Activated CD4-positive, alpha-beta T cell treated with anti-CD3 and anti-CD28 coated beads for 36 hours (primary cell): ENCODE measurements at regions of chr11 and their contacts with region 1.

Region 1: DNA sequence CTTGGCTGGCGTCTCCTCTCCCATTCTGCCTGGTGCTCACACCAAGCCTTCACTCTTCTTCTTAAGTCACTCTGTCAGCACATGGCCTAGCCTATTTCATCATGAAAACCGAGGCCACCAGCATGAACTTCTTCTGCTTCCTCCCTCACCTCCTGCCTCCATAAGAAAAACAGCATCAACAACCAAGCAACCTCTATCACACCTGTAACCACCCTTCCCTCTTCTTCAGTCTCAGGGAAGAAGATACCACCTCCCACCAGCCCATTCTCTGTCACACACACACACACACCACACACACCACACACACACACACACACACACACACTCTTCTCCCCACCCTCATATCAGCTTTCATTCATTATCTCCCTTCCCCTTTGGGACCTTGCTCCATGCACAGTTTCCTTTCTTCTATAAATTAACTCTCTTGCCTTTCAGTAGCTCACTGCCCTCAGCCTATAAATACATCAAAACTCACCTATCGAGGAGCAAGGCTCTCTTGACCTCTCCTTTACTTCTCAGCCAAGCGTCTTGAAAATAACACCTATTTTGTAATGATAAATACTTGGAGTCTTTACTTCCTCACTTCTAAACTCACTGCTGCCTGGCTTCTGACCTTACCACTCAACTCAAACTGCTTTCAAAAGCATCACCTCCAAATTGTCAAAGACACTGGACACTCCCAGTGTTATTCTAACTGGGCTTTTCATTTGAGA is 36.6 kb downstream of the SC5D start:
- DNase-seq: peak; percentile 34
- ATAC-seq: peak; percentile 45
- H3K4me3 Mint-ChIP-seq: no peak overlapping the region
- H3K27ac Mint-ChIP-seq: no peak overlapping the region
- H3K4me1 Mint-ChIP-seq: no peaks in the 10 kb centered on the region
- H3K27me3 Mint-ChIP-seq: no peaks in the 10 kb centered on the region

Region 2: GRCh38 chr11:121199516-121199915 is 129.6 kb before region 1 on chr11:
- CTCF ChIA-PET with region 1: no interaction called
- POLR2A ChIA-PET with region 1: no interaction called
- intact Hi-C with region 1: no loop called
- DNase-seq: no peak
- ATAC-seq: no peak
- H3K4me3 Mint-ChIP-seq: no peak overlapping the region
- H3K27ac Mint-ChIP-seq: no peak overlapping the region
- H3K4me1 Mint-ChIP-seq: peaks cover 3% of the 10 kb centered on the region
- H3K27me3 Mint-ChIP-seq: peaks cover 15% of the 10 kb centered on the region

Region 3: GRCh38 chr11:121417055-121417551 is 88.0 kb after region 1 on chr11:
- CTCF ChIA-PET with region 1: interaction called, 3 read pairs
- POLR2A ChIA-PET with region 1: no interaction called
- intact Hi-C with region 1: loop called in 1 of 2 experiments (anchors 5 kb)
- DNase-seq: peak; percentile 69
- ATAC-seq: peak; percentile 45
- H3K4me3 Mint-ChIP-seq: no peak overlapping the region
- H3K27ac Mint-ChIP-seq: peak overlapping the region; percentile 80
- H3K4me1 Mint-ChIP-seq: peaks cover 69% of the 10 kb centered on the region
- H3K27me3 Mint-ChIP-seq: no peaks in the 10 kb centered on the region